ENCODE measurements at regions of chr5 and their contacts with region 1.

Region 1: DNA sequence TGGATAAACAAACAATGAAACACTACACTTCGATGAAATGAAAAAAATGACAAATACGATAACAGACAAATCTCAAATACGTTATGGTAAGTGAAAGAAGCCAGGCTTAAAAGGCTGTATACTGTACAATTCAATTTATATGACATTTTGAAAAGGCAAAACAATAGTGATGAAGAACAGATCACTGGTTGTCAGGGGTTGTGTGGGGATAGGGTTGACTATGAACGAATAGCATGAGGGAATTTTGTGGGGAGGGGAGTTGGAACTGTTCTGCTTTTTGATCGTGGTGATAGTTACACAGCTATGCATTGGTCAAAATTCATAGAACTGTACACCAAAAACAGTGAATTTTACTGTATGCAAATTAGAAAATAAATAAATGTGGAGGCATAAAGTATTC is 7.8 kb upstream of the FER start:
- DNase-seq: no peak
- ATAC-seq: no peak
- H3K4me3 ChIP-seq: no peak overlapping the region
- H3K27ac ChIP-seq: no peak overlapping the region
- H3K4me1 ChIP-seq: no peaks in the 10 kb centered on the region
- H3K27me3 ChIP-seq: no peaks in the 10 kb centered on the region
- CTCF ChIP-seq: no peak

Region 2: DNA sequence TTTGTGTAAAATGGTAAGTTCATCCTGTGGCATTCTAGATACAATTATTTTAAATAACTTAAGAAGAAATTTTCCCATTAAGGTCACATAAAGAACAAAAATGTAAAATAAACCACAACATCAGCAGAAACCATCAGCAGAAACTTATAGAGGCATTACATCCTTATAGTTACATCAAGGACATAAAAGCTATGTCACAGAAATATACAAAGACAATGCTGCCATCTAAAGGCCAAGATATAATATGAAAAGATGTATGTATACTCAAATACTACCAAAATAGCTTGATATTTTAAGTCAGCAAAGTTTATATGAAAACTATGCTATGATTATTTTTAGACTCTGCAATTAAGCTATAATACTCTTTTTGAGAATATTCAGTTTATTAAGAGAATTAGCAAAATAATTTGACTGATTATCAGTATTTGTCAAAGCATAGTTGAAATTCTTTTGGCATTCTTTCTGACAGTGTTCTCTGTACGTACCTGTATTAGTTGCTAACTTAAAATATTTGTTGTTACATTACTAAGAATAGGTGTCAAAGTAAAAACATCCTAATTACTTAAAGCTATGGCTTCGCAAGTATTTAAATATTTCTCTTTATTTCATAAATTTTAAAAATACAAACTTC is 394.2 kb before region 1 on chr5:
- CTCF ChIA-PET with region 1: no interaction called
- POLR2A ChIA-PET with region 1: no interaction called
- in situ Hi-C with region 1: no loop called
- intact Hi-C with region 1: no loop called
- DNase-seq: peak; percentile 18
- ATAC-seq: peak; percentile 80
- H3K4me3 ChIP-seq: no peak overlapping the region
- H3K27ac ChIP-seq: no peak overlapping the region
- H3K4me1 ChIP-seq: no peaks in the 10 kb centered on the region
- H3K27me3 ChIP-seq: no peaks in the 10 kb centered on the region
- CTCF ChIP-seq: peak; percentile 27; the same call in 1 of the 2 replicates

Region 3: DNA sequence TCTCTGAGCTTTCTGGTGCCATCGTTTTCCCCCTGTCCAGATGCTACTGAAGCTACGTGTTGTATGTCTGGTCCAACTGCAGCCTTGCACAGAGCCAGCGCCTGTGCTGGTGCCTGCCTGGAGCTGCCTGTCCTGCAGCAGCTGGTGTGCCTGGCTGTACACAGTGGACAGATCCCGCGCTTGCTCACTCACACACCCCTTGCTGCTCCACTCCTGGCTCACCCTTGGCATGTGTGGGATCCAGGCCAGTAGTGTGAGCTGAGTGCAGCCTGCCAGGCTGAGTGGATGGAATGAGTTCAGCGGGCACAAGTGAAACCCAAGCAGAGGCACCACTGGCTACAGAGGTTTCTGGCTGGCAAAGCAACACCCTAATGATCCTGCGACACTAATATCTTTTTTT is 48.2 kb after region 1 on chr5:
- CTCF ChIA-PET with region 1: no interaction called
- POLR2A ChIA-PET with region 1: no interaction called
- in situ Hi-C with region 1: no loop called
- intact Hi-C with region 1: no loop called
- DNase-seq: no peak
- ATAC-seq: no peak
- H3K4me3 ChIP-seq: no peak overlapping the region
- H3K27ac ChIP-seq: no peak overlapping the region
- H3K4me1 ChIP-seq: no peaks in the 10 kb centered on the region
- H3K27me3 ChIP-seq: no peaks in the 10 kb centered on the region
- CTCF ChIP-seq: no peak

Region 4: GRCh38 chr5:108818613-108819272 is 78.8 kb after region 1 on chr5:
- CTCF ChIA-PET with region 1: no interaction called
- POLR2A ChIA-PET with region 1: interaction called, 10 read pairs
- in situ Hi-C with region 1: no loop called
- intact Hi-C with region 1: no loop called
- DNase-seq: no peak
- ATAC-seq: no peak
- H3K4me3 ChIP-seq: no peak overlapping the region
- H3K27ac ChIP-seq: no peak overlapping the region
- H3K4me1 ChIP-seq: no peaks in the 10 kb centered on the region
- H3K27me3 ChIP-seq: no peaks in the 10 kb centered on the region
- CTCF ChIP-seq: no peak